ENCODE measurements at regions of chr5 and their contacts with region 1.

Region 1: DNA sequence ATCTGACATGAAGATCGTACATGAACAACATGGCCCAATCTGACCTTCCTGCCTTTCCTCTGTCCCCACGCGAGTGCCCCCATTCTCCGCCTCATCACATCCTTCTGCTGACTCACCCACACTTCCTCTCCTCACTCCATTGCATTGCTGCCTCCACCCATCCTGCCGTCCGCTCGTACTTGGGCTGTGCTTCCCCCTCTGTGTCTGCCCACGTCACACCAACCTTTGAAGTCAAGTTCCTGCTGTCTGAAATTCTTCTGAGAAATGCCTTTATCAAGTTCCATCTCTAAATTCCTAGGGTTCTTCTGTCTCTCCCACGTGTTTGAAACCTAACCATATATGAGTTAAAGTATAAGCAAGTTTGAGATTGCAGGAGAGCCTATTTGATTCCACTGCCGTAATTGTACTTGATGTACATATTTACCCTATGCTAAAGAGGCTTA is 18.0 kb upstream of the STARD4 start:
- DNase-seq: peak; percentile 94
- ATAC-seq: peak; percentile 100
- H3K4me3 Mint-ChIP-seq: peak overlapping the region; percentile 55
- H3K27ac Mint-ChIP-seq: peak overlapping the region; percentile 93
- H3K4me1 Mint-ChIP-seq: peaks cover 18% of the 10 kb centered on the region
- H3K27me3 Mint-ChIP-seq: no peaks in the 10 kb centered on the region
- CTCF ChIP-seq: no peak

Region 2: DNA sequence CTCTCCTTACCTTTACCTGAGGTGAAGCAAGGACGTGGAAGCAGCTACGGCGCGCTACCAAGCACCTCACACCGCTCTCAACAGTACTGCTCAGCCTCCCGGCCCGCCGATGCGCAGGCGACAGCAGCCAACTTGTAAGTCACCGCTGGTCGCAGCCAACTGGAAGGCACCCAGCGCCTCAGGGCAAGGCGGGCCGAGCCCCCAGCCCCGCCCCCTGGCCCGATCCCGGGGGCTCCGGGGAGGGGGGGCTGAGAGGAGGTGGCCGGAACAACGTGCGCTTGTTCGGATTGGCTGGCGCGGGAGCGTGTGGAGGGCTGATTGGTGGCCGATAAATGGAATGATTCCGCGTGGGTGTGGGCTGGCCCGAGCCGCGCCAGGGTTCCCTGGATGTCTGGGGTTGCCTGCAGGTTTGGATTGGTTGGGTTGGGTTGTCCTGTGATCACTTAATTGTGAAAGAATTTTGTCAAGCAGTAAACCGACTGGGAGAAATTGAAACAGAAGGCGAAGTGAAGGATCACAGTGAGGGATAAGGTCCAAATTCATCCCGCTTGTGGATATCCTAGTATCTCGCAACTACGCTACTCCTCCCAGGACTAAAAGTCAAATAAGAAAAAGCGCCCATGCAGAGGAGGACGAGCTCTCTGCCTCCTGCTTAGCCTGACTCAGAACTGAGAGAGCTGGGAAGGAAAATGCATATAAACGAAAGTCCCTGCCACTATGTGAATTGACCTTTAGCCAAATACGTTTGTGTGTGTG is 17.8 kb before region 1 on chr5 and contains the start of gene STARD4:
- CTCF ChIA-PET with region 1: interaction called, 16 read pairs
- POLR2A ChIA-PET with region 1: interaction called, 6 read pairs
- intact Hi-C with region 1: no loop called
- DNase-seq: peak; percentile 96
- ATAC-seq: peak; percentile 96
- H3K4me3 Mint-ChIP-seq: peak within 1 kb of the TSS; percentile 92
- H3K27ac Mint-ChIP-seq: peak within 1 kb of the TSS; percentile 98
- H3K4me1 Mint-ChIP-seq: peaks cover 48% of the 10 kb centered on the region
- H3K27me3 Mint-ChIP-seq: no peaks in the 10 kb centered on the region
- CTCF ChIP-seq: no peak
- total RNA-seq, gene STARD4: 132 TPM

Region 3: DNA sequence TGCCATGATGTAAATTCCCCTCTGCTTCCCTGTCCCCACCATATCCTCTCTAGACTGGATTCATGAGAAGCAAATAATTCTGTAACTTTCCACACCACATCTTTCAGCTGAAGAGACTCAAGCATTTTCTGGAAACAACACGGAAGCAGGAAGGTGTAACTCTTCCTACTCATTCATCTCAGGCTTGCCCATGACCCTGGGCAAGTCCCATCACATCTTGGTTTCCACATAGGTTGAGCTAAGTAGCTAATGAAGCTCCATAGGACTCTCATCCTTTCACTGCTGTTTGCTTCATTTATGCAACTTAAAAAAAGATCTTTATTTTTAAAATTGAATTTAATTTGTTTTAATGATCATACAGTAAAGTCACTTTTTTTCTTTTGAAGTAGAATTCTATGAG is 14.7 kb after region 1 on chr5:
- CTCF ChIA-PET with region 1: interaction called, 58 read pairs
- POLR2A ChIA-PET with region 1: no interaction called
- intact Hi-C with region 1: no loop called
- DNase-seq: no peak
- ATAC-seq: no peak
- H3K4me3 Mint-ChIP-seq: no peak overlapping the region
- H3K27ac Mint-ChIP-seq: no peak overlapping the region
- H3K4me1 Mint-ChIP-seq: no peaks in the 10 kb centered on the region
- H3K27me3 Mint-ChIP-seq: peaks cover 6% of the 10 kb centered on the region
- CTCF ChIP-seq: no peak

Region 4: DNA sequence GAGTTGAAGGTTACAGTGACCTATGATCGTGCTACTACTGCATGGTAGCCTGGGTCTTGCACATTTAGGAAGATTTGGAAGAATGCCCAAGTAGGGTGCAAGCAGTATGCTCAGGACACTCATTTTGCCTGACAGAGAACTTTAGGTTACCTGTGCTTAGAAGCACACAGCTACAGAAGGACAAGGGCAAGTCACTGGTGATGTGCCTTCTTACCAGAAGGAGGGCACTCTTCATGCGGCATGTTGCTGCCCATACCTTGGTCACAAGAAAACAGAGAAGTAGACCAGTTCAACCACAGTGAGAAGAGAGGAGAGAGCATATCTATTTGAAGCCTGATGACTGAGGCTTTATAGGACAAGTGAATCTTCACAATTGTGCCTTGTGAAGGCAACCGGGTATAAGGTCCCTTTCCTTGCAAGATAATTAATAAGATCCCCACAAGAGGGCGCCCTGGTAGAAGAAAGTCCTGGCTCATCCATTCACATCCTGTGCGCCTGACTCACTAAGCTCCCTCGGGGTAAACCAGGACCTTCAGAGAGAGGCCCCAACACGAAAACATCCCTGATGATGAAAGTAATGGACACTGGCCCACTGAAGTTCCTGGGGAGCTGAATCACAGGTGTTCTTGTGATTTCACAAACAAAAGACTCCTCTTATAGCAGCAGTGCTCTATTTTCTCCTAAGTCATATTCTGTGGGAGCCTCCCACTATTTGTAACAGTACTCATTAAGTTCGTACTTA is 20.1 kb after region 1 on chr5:
- CTCF ChIA-PET with region 1: interaction called, 58 read pairs
- POLR2A ChIA-PET with region 1: no interaction called
- intact Hi-C with region 1: no loop called
- DNase-seq: peak; percentile 88
- ATAC-seq: peak; percentile 91
- H3K4me3 Mint-ChIP-seq: no peak overlapping the region
- H3K27ac Mint-ChIP-seq: peak overlapping the region; percentile 63
- H3K4me1 Mint-ChIP-seq: peaks cover 25% of the 10 kb centered on the region
- H3K27me3 Mint-ChIP-seq: no peaks in the 10 kb centered on the region
- CTCF ChIP-seq: peak; percentile 75

Region 5: GRCh38 chr5:111556501-111556900 is 26.2 kb after region 1 on chr5:
- CTCF ChIA-PET with region 1: interaction called, 58 read pairs
- POLR2A ChIA-PET with region 1: no interaction called
- intact Hi-C with region 1: no loop called
- DNase-seq: no peak
- ATAC-seq: no peak
- H3K4me3 Mint-ChIP-seq: no peak overlapping the region
- H3K27ac Mint-ChIP-seq: no peak overlapping the region
- H3K4me1 Mint-ChIP-seq: peaks cover 14% of the 10 kb centered on the region
- H3K27me3 Mint-ChIP-seq: peaks cover 6% of the 10 kb centered on the region
- CTCF ChIP-seq: no peak

Region 6: DNA sequence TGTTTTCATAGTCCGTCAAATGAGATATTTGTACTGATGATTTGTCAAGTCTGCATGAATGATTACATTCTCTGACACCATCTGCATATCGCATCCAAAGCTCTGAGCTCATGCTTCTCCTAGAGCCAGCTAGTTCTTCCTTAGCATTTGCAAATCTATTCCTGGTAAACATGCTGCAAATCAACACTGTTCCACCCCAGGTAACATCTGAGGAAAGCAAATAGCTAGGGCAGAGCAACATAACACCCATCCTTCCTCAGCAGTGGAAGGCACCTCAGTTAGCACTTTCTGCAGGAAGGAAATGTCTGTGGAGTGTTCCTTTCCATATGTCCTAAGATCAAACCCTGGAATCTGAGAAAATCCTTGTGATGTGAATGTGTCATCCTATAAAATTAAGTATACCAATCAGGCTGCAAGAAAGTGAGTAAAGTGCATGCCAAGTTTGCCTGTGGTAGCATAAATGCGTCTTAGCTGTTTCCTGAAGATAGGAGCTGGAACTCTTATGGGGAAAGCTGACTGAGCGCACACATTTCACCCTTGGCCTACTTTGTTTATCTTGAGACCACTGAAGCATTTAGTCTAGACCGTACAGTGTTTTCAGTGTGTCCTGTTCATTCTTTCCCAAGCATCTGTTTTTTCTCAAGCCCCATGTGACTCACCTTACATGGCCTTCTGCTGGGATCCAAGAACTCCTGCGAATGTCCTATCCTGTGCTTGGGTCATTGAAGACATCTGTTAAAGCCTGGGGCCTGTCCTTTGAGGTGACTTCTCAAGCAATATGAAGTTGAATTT is 32.9 kb after region 1 on chr5:
- CTCF ChIA-PET with region 1: interaction called, 10 read pairs
- POLR2A ChIA-PET with region 1: no interaction called
- intact Hi-C with region 1: no loop called
- DNase-seq: no peak
- ATAC-seq: no peak
- H3K4me3 Mint-ChIP-seq: no peak overlapping the region
- H3K27ac Mint-ChIP-seq: no peak overlapping the region
- H3K4me1 Mint-ChIP-seq: no peaks in the 10 kb centered on the region
- H3K27me3 Mint-ChIP-seq: peaks cover 9% of the 10 kb centered on the region
- CTCF ChIP-seq: no peak

Region 7: GRCh38 chr5:111730659-111731382 is 200.5 kb after region 1 on chr5:
- CTCF ChIA-PET with region 1: no interaction called
- POLR2A ChIA-PET with region 1: no interaction called
- intact Hi-C with region 1: no loop called
- DNase-seq: no peak
- ATAC-seq: peak; percentile 41
- H3K4me3 Mint-ChIP-seq: no peak overlapping the region
- H3K27ac Mint-ChIP-seq: peak overlapping the region; percentile 68
- H3K4me1 Mint-ChIP-seq: peaks cover 18% of the 10 kb centered on the region
- H3K27me3 Mint-ChIP-seq: no peaks in the 10 kb centered on the region
- CTCF ChIP-seq: no peak

Region 8: GRCh38 chr5:112146323-112147226 is 616.3 kb after region 1 on chr5:
- CTCF ChIA-PET with region 1: interaction called, 6 read pairs
- POLR2A ChIA-PET with region 1: no interaction called
- intact Hi-C with region 1: loop called (anchors 5 kb)
- DNase-seq: peak; percentile 77
- ATAC-seq: peak; percentile 90
- H3K4me3 Mint-ChIP-seq: no peak overlapping the region
- H3K27ac Mint-ChIP-seq: no peak overlapping the region
- H3K4me1 Mint-ChIP-seq: no peaks in the 10 kb centered on the region
- H3K27me3 Mint-ChIP-seq: peaks cover 3% of the 10 kb centered on the region
- CTCF ChIP-seq: peak; percentile 80

Measured in activated CD8-positive, alpha-beta T cell treated with anti-CD3 and anti-CD28 coated beads for 36 hours (primary cell).